ENCODE measurements at regions of chr9 and their contacts with region 1.

Region 1: DNA sequence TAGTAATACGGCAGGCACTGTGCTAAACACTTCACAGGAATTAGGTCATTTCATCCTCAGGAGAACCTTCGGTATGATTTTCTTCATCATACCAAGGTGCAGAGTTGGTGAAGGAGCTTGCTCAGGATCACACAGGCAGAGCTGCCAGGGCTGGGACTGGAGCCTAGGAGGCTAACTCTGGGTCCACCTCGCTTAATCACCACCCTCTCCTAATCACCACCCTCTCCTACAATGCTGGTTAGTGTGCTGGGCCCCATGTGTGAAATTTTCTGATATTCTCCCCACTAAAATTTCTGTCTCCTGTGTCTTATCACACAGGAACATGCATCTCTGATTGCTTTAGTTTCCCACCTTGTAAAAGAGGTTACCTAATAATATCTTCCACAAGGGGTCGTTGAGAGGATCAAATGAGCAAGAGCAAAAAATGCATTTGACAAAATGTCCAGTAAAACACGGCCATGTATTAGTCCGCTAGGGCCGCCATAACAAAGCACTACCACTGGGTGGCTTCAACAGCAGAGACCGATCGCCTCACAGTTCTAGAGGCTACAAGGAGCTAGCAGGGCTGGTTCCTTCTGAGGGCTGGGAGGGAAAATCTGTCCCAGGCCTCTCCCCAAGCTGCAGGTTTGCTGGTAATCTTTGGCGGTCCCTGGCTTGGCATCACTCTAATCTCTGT is 128.2 kb upstream of the NFIB start:
- DNase-seq: no peak
- H3K4me3 ChIP-seq: no peak overlapping the region
- H3K27ac ChIP-seq: no peak overlapping the region
- H3K4me1 ChIP-seq: peaks cover 8 to 28% of the 10 kb centered on the region in 2 experiments; a peak in 2 of 4 replicates
- H3K27me3 ChIP-seq: no peaks in the 10 kb centered on the region
- CTCF ChIP-seq: peak; percentile 47
- EP300 ChIP-seq: no peak
- RAD21 ChIP-seq: 0 out of 2 replicates have a peak, but pooled peaks have one; percentile 9

Region 2: GRCh38 chr9:14415947-14416346 is 26.2 kb before region 1 on chr9:
- CTCF ChIA-PET with region 1: no interaction called
- POLR2A ChIA-PET with region 1: no interaction called
- DNase-seq: no peak
- H3K4me3 ChIP-seq: no peak overlapping the region
- H3K27ac ChIP-seq: no peak overlapping the region
- H3K4me1 ChIP-seq: peaks cover 6 to 9% of the 10 kb centered on the region in 2 experiments; a peak in 2 of 4 replicates
- H3K27me3 ChIP-seq: no peaks in the 10 kb centered on the region
- CTCF ChIP-seq: no peak
- EP300 ChIP-seq: no peak
- RAD21 ChIP-seq: no peak

Region 3: DNA sequence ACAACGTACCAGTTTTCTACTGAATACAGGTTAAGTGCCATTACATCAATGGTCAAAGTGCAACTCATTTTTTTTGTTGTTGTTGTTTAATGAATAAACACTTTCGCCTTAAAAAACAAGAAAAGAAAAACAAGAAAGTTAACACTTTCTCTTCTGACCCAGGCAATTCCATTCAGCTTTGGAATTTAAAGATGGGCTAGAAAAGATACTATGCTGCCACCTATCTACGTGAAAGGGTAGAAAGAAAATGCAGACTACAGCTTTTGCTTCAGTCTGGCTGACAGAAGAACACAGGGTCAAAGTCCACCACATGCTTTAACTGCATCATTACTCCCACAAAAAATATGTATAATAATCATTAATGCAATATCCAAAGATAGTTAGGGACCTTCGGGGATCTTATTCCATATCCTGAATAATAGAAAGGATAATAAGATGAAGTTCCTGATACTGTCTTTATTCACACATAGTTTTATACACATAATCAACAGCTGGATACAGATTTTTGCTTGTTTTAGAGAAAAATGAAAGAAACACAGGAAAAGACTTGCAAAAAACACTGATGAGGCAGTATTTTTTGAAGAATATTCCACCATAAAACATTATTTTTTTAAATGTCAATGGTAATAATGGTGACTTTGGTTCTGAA is 210.7 kb after region 1 on chr9:
- CTCF ChIA-PET with region 1: interaction called, 15 read pairs
- POLR2A ChIA-PET with region 1: no interaction called
- DNase-seq: peak; percentile 40
- H3K4me3 ChIP-seq: no peak overlapping the region
- H3K27ac ChIP-seq: no peak overlapping the region
- H3K4me1 ChIP-seq: no peaks in the 10 kb centered on the region
- H3K27me3 ChIP-seq: no peaks in the 10 kb centered on the region
- CTCF ChIP-seq: peak; percentile 30; the same call in 1 of the 2 replicates
- EP300 ChIP-seq: no peak
- RAD21 ChIP-seq: peak; percentile 74